Mammary epithelial cell (primary cell): ENCODE measurements at regions of chr2 and their contacts with region 1.

Region 1: DNA sequence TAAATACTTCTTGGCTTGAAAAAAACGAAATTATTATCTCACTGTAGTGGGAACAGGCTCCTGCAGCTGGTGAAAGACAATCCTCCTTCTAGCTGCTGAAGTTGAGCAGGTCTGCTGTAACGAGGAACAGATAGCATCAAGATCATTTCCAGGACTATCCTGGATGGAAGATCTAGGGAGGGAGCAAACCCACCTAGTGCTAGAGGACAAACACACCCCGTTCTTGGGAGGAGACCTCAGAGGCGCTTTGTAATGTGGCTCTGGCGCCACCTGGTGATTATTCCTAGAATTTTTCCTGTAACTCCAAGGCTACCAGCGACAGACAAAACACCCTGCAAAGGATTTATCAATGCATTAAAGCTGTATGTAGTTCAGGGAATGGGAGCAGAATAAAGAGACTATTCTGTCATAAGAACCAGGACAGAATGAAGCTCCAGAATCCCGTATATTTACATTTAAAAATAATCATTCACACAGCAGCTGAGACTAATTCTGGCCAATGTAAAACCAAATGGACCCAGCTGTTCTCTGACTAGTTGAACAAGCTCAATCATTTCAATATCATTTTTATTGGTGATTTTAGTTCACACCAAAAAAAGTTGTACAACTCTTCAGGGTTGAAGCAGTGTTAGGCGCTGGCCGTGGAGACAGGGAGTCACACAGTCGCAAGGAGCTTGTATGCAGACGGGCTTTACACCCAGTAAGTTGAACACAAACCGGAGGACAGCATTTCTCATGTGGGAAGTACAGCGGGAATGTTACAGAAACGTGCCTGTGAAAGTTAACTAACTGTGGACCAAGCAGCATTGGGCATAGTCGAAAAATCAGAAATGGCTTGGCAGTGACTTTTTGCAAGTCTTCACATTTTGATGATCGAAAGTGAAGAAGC is 290.3 kb downstream of the TRIB2 start:
- DNase-seq: peak; percentile 40
- H3K4me3 ChIP-seq: peak overlapping the region; percentile 14 to 31 (median 28)
- H3K27ac ChIP-seq: no peak overlapping the region
- H3K4me1 ChIP-seq: peaks cover 30% of the 10 kb centered on the region
- H3K27me3 ChIP-seq: no peaks in the 10 kb centered on the region
- CTCF ChIP-seq: peak; percentile 63 to 81

Region 2: GRCh38 chr2:12176623-12177454 is 830.2 kb before region 1 on chr2:
- CTCF ChIA-PET with region 1: no interaction called
- dilution Hi-C with region 1: no loop called
- in situ Hi-C with region 1: no loop called
- intact Hi-C with region 1: loop called (anchors 10 kb)
- DNase-seq: peak; percentile 49
- H3K4me3 ChIP-seq: no peak overlapping the region
- H3K27ac ChIP-seq: no peak overlapping the region
- H3K4me1 ChIP-seq: peaks cover 20% of the 10 kb centered on the region
- H3K27me3 ChIP-seq: no peaks in the 10 kb centered on the region
- CTCF ChIP-seq: no peak

Region 3: GRCh38 chr2:12430407-12431133 is 576.5 kb before region 1 on chr2:
- CTCF ChIA-PET with region 1: no interaction called
- dilution Hi-C with region 1: no loop called
- in situ Hi-C with region 1: loop called in 1 of 2 experiments (anchors 25 kb)
- intact Hi-C with region 1: loop called (anchors 5 kb)
- DNase-seq: no peak
- H3K4me3 ChIP-seq: no peak overlapping the region
- H3K27ac ChIP-seq: no peak overlapping the region
- H3K4me1 ChIP-seq: no peaks in the 10 kb centered on the region
- H3K27me3 ChIP-seq: no peaks in the 10 kb centered on the region
- CTCF ChIP-seq: no peak

Region 4: GRCh38 chr2:12819103-12819475 is 188.0 kb before region 1 on chr2:
- CTCF ChIA-PET with region 1: no interaction called
- dilution Hi-C with region 1: no loop called
- in situ Hi-C with region 1: no loop called
- intact Hi-C with region 1: loop called (anchors 2 kb)
- DNase-seq: peak; percentile 85
- H3K4me3 ChIP-seq: no peak overlapping the region
- H3K27ac ChIP-seq: no peak overlapping the region
- H3K4me1 ChIP-seq: peaks cover 39% of the 10 kb centered on the region
- H3K27me3 ChIP-seq: no peaks in the 10 kb centered on the region
- CTCF ChIP-seq: no peak

Region 5: GRCh38 chr2:12884713-12885282 is 122.3 kb before region 1 on chr2:
- CTCF ChIA-PET with region 1: no interaction called
- dilution Hi-C with region 1: no loop called
- in situ Hi-C with region 1: no loop called
- intact Hi-C with region 1: loop called (anchors 5 kb)
- DNase-seq: peak; percentile 25
- H3K4me3 ChIP-seq: no peak overlapping the region
- H3K27ac ChIP-seq: no peak overlapping the region
- H3K4me1 ChIP-seq: peaks cover 6% of the 10 kb centered on the region
- H3K27me3 ChIP-seq: no peaks in the 10 kb centered on the region
- CTCF ChIP-seq: no peak

Region 6: DNA sequence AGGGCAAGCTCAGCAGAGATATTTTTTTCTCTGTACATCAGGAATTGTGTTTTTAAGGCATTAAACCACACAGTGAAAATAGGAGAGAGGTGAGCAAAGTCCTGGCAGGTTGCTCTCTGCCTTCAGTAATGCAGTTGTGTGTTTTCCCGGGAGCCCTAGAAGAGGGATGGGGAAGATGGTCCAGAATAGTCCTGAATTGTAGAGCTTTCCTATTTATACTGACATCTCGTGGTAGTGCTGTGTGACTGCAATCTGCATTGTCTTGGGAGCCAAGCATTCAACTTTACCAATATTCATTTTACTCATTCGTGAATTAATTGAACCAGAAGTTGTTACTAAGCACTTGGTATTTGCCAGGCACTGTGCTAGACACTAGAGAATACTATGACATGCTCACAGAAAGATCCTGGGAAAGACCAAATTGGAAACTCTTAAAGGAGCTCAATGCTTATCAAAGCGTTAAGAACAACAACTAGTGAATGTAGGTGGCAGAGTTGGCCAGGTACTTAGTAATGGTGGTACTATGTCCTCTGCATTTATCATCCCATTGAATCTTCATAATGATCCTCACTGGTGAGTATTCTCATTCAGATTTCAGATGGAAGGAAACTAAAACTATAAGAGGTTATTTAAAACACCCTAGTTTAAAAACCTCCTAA is 75.8 kb before region 1 on chr2:
- CTCF ChIA-PET with region 1: interaction called, 4 read pairs
- dilution Hi-C with region 1: no loop called
- in situ Hi-C with region 1: no loop called
- intact Hi-C with region 1: loop called (anchors 2 kb)
- DNase-seq: peak; percentile 35
- H3K4me3 ChIP-seq: no peak overlapping the region
- H3K27ac ChIP-seq: no peak overlapping the region
- H3K4me1 ChIP-seq: peaks cover 23% of the 10 kb centered on the region
- H3K27me3 ChIP-seq: no peaks in the 10 kb centered on the region
- CTCF ChIP-seq: peak; percentile 88 to 96